Dorsolateral prefrontal cortex (tissue), 120 donors: ENCODE measurements at regions of chr18 and their contacts with region 1.

Region 1: GRCh38 chr18:13800505-13801259 is 23.3 kb upstream of the MC5R start:
- DNase-seq: peak; percentile 53 to 83 (median 62)
- H3K4me3 ChIP-seq: peak overlapping the region; percentile 21 to 67 (median 48)
- H3K27ac ChIP-seq: no peak overlapping the region
- H3K27me3 ChIP-seq: peaks cover 0 to 15% (median 0%) of the 10 kb centered on the region in 45 donors
- CTCF ChIP-seq: peak in 54 of 56 donors; percentile 26 to 76 (median 54)

Region 2: DNA sequence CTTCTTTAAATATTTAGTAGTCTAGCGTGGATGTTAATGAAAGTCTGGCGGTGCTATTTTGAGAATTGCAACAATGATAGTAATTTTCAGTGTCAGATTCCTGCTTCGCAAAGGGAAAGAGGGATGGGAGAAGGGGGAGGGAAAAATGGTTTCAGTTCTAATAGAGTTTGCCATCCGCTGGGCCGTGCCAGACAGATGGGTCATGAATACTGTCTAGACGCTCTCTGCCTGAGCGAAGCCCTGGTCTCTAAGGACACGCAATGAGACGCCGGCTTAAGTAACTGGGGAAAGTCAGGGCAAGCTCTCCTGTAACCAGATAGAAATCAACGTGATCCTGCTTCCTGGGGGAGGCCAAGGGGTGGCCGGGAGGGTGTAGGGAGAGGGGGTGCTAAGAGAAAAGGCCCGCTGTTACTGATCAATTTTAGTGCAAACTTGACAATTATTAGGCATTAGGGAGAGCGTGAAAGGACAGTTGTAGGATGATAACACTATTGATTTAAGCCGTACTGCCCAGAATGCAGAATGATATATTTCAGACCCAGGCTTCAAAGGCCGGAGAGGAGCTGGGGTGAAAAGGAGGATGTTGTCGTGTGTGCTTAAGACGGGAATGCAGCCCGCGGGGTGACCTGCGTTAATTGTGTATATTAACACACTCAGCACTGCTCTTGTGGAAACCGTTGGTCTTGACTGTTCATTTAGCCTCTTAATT is 352.9 kb before region 1 on chr18:
- intact Hi-C with region 1: no loop called
- DNase-seq: no peak
- H3K4me3 ChIP-seq: peak overlapping the region in 58 of 59 donors; percentile 2 to 64 (median 39)
- H3K27ac ChIP-seq: peak overlapping the region in 17 of 59 donors; percentile 1 to 66 (median 39)
- H3K27me3 ChIP-seq: no peaks in the 10 kb centered on the region
- CTCF ChIP-seq: no peak

Region 3: DNA sequence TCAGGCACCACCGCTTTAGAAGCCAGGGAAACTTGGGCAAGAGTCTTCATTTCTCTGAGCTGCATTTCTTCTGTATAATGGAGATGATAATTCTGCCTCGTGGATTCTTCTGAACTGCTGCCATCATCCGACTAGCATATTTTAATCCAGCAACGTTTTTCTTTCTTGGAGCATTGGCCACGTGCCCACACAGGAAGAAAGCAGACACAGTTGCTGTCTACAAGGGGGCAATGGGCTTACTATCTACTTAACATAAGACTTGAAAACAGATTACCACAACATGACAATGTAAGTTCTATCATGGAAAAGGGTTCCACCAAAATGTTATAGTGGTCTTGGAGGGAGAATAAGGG is 250.8 kb before region 1 on chr18:
- intact Hi-C with region 1: loop called in 1 of 2 experiments (anchors 5 kb)
- DNase-seq: peak in 1 of 10 donors; percentile 27
- H3K4me3 ChIP-seq: no peak overlapping the region
- H3K27ac ChIP-seq: peak overlapping the region in 47 of 59 donors; percentile 5 to 78 (median 54)
- H3K27me3 ChIP-seq: no peaks in the 10 kb centered on the region
- CTCF ChIP-seq: no peak

Region 4: GRCh38 chr18:13638719-13639595 is 161.7 kb before region 1 on chr18:
- intact Hi-C with region 1: loop called in 1 of 2 experiments (anchors 5 kb)
- DNase-seq: peak in 1 of 10 donors; percentile 33
- H3K4me3 ChIP-seq: peak overlapping the region in 9 of 59 donors; percentile 2 to 39 (median 9)
- H3K27ac ChIP-seq: peak overlapping the region in 57 of 59 donors; percentile 27 to 99 (median 82)
- H3K27me3 ChIP-seq: no peaks in the 10 kb centered on the region
- CTCF ChIP-seq: no peak